BJ (cell line): ENCODE measurements at regions of chr17 and their contacts with region 1.

Region 1: DNA sequence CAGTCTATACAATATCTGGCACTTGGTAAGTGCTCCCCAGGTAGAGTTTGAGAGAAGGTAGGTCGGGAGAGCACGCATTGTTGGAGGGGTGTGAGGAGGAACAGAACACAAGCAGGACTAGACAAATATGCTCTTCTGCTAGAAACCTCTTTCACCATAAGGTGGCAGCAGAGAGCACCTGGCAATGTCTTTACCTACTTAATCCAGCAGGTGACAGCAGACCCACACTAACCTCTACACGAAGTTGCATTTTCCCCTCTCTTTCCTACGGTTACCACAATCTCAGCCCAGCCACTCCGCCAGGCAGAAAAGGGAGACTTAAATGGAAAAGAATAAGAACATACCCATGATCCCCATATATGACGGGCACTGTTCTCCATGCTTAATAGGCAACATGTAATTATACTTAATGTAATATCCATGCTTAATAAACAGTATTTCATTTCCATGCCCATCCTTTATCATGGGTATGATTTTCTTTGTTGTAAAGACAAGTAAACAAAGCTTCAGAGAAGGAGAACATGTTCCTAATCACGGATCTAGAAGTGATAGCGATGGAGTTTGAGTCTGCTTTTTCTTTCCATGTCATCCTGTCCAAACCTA is 55.1 kb upstream of the CCL2 start:
- DNase-seq: no peak
- H3K4me3 ChIP-seq: no peak overlapping the region
- H3K27me3 ChIP-seq: no peaks in the 10 kb centered on the region
- CTCF ChIP-seq: peak; percentile 100

Region 2: GRCh38 chr17:34220754-34221395 is 20.8 kb after region 1 on chr17:
- CTCF ChIA-PET with region 1: interaction called, 25 read pairs
- POLR2A ChIA-PET with region 1: no interaction called
- DNase-seq: no peak
- H3K4me3 ChIP-seq: no peak overlapping the region
- H3K27me3 ChIP-seq: no peaks in the 10 kb centered on the region
- CTCF ChIP-seq: no peak

Region 3: GRCh38 chr17:34248511-34249024 is 48.5 kb after region 1 on chr17:
- CTCF ChIA-PET with region 1: interaction called, 25 read pairs
- POLR2A ChIA-PET with region 1: no interaction called
- DNase-seq: peak; percentile 94
- H3K4me3 ChIP-seq: no peak overlapping the region
- H3K27me3 ChIP-seq: no peaks in the 10 kb centered on the region
- CTCF ChIP-seq: no peak

Region 4: DNA sequence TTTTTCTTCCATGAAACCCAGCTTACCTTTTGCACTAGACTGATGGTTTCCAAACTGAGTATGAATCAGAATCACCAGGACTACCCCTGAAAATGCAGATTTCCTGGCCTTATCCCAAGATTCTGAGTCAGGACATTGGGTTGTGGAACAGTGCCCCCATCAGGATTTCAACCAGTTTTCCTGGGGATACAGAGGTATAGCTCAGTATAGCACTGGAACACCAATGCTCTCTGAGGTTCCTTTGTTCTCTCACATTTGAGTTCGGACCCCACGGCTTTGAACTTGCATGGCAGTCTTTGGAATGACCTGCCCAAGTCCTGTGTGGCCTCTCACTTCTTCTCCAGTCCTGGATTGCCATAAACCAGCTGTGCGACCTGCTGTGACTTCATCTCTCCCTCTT is 106.4 kb after region 1 on chr17:
- CTCF ChIA-PET with region 1: interaction called, 176 read pairs
- POLR2A ChIA-PET with region 1: no interaction called
- DNase-seq: no peak
- H3K4me3 ChIP-seq: no peak overlapping the region
- H3K27me3 ChIP-seq: no peaks in the 10 kb centered on the region
- CTCF ChIP-seq: peak; percentile 63

Region 5: GRCh38 chr17:34370997-34371395 is 171.0 kb after region 1 on chr17:
- CTCF ChIA-PET with region 1: interaction called, 11 read pairs
- POLR2A ChIA-PET with region 1: no interaction called
- DNase-seq: peak; percentile 18
- H3K4me3 ChIP-seq: no peak overlapping the region
- H3K27me3 ChIP-seq: peaks cover 1% of the 10 kb centered on the region; the same call in 1 of the 2 replicates
- CTCF ChIP-seq: no peak